GM12878 (cell line): ENCODE measurements at regions of chr11 and their contacts with region 1.

Region 1: DNA sequence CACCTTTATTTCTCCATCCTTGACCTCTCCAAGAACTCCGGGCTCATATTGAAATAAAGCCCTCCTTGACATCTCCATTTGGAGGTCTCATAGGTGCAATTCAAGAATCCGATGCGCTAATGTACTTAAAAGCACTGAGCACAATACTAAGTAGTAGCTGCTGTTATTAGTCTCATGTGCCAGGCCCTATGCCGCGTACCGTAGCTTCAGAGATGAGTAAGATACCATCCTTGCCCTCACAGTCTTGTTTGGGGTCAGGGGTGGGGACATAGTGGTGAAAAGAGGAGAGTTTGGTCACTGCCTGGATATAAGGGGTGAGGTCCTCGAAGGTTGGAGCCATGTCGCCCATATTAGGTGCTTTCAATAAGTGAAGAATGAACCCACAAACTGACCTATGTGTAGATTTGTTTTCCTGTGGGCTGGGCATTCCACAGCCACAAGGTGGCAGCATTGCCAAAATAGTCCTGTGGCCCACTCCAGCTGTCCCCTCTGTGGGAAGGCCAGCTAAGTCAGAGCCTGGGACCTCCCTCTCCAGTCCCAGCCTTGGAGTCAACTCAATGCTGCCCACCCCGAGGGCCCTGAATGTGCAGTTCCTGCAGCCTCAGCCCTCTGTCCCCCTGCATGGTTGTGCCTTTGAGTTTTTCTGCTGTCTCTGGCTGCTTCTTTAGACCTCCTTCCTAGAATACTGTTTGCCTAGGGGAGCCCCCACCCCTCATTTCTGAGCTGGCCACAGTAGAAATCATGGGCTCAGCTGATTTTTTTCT is 6.5 kb downstream of the DCPS start:
- DNase-seq: no peak
- ATAC-seq: peak; percentile 74
- H3K4me3 ChIP-seq: no peak overlapping the region
- H3K27ac ChIP-seq: no peak overlapping the region
- H3K4me1 ChIP-seq: peaks cover 44% of the 10 kb centered on the region
- H3K27me3 ChIP-seq: no peaks in the 10 kb centered on the region
- CTCF ChIP-seq: peak; percentile 76 to 95 (median 89); a peak in 5 of 6 replicates
- EP300 ChIP-seq: no peak
- POLR2A ChIP-seq: no peak
- RAD21 ChIP-seq: peak; percentile 89

Region 2: GRCh38 chr11:126282736-126283591 is 27.4 kb before region 1 on chr11 and contains the start of gene TIRAP:
- CTCF ChIA-PET with region 1: interaction called, 18 read pairs
- POLR2A ChIA-PET with region 1: interaction called, 3 read pairs
- RAD21 ChIA-PET with region 1: interaction called, 3 read pairs
- SMC1A ChIA-PET with region 1: interaction called, 9 read pairs
- in situ Hi-C with region 1: no loop called
- intact Hi-C with region 1: no loop called
- DNase-seq: no peak
- ATAC-seq: peak; percentile 83
- H3K4me3 ChIP-seq: peak within 1 kb of the TSS; percentile 96
- H3K27ac ChIP-seq: peak within 1 kb of the TSS; percentile 84
- H3K4me1 ChIP-seq: peaks cover 22% of the 10 kb centered on the region
- H3K27me3 ChIP-seq: no peaks in the 10 kb centered on the region
- CTCF ChIP-seq: no peak
- EP300 ChIP-seq: no peak
- POLR2A ChIP-seq: peak; percentile 81
- RAD21 ChIP-seq: no peak
- polyA plus RNA-seq, gene TIRAP: 0.76 to 0.88 TPM

Region 3: DNA sequence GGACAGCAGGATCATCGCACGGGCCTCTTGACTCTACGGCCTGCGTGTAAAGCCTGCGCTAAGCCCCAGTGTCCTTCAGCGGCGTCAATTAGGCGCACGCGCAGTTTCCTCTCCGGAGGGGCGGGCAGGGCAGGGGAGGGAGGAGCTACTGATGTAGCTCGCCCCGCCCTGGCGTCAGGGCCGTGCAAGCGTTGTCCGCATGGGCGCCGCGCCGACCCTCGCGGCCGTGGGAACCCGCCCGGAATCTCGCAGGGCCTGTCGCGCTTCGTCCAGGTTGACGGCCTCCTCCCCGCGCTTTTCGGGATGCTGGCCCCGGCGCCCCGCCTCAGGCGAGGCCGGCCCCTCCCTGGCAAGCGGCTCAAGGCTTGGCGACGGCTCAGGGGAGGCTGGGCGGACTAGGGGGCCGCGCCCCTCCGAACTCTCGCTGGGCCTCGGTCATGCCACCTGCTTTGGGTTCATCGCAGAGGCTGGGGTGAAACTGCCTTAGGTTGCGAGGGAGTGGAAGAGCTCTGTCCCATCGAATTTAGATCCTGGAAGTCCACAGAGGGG is 106.2 kb after region 1 on chr11:
- CTCF ChIA-PET with region 1: interaction called, 14 read pairs
- POLR2A ChIA-PET with region 1: interaction called, 3 read pairs
- RAD21 ChIA-PET with region 1: interaction called, 16 read pairs
- SMC1A ChIA-PET with region 1: interaction called, 12 read pairs
- in situ Hi-C with region 1: no loop called
- intact Hi-C with region 1: loop called (anchors 2 kb)
- DNase-seq: peak; percentile 27
- ATAC-seq: peak; percentile 88
- H3K4me3 ChIP-seq: 0 out of 2 replicates have a peak overlapping the region, but pooled peaks have one; percentile 17
- H3K27ac ChIP-seq: no peak overlapping the region
- H3K4me1 ChIP-seq: peaks cover 13% of the 10 kb centered on the region
- H3K27me3 ChIP-seq: peaks cover 0 to 2% of the 10 kb centered on the region in 2 experiments; a peak in 2 of 4 replicates
- CTCF ChIP-seq: no peak
- EP300 ChIP-seq: no peak
- POLR2A ChIP-seq: no peak
- RAD21 ChIP-seq: no peak

Region 4: GRCh38 chr11:126440792-126441514 is 130.5 kb after region 1 on chr11:
- CTCF ChIA-PET with region 1: interaction called, 35 read pairs
- POLR2A ChIA-PET with region 1: no interaction called
- RAD21 ChIA-PET with region 1: interaction called, 14 read pairs
- SMC1A ChIA-PET with region 1: interaction called, 6 read pairs
- in situ Hi-C with region 1: no loop called
- intact Hi-C with region 1: loop called (anchors 1 kb)
- DNase-seq: no peak
- ATAC-seq: peak; percentile 92
- H3K4me3 ChIP-seq: no peak overlapping the region
- H3K27ac ChIP-seq: no peak overlapping the region
- H3K4me1 ChIP-seq: no peaks in the 10 kb centered on the region
- H3K27me3 ChIP-seq: no peaks in the 10 kb centered on the region; a peak in 1 of 4 replicates
- CTCF ChIP-seq: peak; percentile 90 to 93 (median 92); a peak in 5 of 6 replicates
- EP300 ChIP-seq: no peak
- POLR2A ChIP-seq: no peak
- RAD21 ChIP-seq: peak; percentile 94

Region 5: GRCh38 chr11:126989942-126990715 is 679.7 kb after region 1 on chr11:
- CTCF ChIA-PET with region 1: interaction called, 8 read pairs
- POLR2A ChIA-PET with region 1: no interaction called
- RAD21 ChIA-PET with region 1: interaction called, 4 read pairs
- SMC1A ChIA-PET with region 1: no interaction called
- in situ Hi-C with region 1: no loop called
- intact Hi-C with region 1: loop called (anchors 10 kb)
- DNase-seq: no peak
- ATAC-seq: peak; percentile 98
- H3K4me3 ChIP-seq: no peak overlapping the region
- H3K27ac ChIP-seq: no peak overlapping the region
- H3K4me1 ChIP-seq: no peaks in the 10 kb centered on the region
- H3K27me3 ChIP-seq: peaks cover 0 to 12% of the 10 kb centered on the region in 2 experiments; a peak in 3 of 4 replicates
- CTCF ChIP-seq: peak; percentile 94 to 98 (median 94)
- EP300 ChIP-seq: no peak
- POLR2A ChIP-seq: no peak
- RAD21 ChIP-seq: peak; percentile 90